ENCODE measurements at regions of chr13 and their contacts with region 1.

Region 1: DNA sequence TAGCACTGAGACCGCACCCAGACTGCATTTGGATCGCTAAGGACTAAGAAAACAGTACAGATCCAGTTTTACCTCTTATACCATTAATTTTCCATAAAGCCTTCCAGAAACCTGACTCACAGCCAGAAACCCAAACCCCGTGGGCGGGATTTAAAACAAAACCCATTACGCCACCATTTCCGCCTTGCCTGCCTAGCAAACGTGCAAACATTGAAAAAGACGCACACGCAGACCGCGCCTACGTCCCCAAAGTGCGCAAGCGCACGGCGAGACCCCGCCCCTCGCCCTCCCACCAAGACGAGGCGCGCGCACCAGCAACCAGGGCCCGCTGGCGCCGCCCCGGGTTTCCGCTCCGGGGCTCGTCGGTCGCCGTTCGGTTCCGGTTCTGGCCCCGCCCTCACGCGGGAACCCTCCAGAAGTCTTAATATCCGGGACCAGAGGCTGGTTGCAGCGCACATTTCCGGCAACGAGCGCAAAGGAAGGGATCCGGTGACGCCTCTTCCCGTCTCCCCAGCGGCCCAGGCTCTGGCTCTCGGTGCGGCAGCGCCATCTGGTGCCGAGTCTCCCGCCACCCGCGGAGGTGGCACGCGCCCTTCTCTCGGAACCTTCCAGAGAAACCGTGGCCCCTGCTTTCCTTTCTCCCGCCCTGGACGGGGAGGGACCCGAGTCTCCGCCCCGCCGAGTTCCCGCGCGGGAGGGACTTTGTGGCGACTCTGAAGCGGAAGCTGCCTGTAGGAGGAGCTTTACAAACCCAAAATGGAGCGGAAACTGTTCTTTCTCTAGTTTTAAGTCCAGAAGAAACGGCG is 256.9 kb upstream of the STARD13 start:
- DNase-seq: peak; percentile 97
- ATAC-seq: peak; percentile 85
- H3K4me3 ChIP-seq: peak overlapping the region; percentile 71
- H3K27ac ChIP-seq: peak overlapping the region; percentile 97
- H3K4me1 ChIP-seq: peaks cover 41% of the 10 kb centered on the region
- H3K27me3 ChIP-seq: no peaks in the 10 kb centered on the region
- CTCF ChIP-seq: peak; percentile 84

Region 2: DNA sequence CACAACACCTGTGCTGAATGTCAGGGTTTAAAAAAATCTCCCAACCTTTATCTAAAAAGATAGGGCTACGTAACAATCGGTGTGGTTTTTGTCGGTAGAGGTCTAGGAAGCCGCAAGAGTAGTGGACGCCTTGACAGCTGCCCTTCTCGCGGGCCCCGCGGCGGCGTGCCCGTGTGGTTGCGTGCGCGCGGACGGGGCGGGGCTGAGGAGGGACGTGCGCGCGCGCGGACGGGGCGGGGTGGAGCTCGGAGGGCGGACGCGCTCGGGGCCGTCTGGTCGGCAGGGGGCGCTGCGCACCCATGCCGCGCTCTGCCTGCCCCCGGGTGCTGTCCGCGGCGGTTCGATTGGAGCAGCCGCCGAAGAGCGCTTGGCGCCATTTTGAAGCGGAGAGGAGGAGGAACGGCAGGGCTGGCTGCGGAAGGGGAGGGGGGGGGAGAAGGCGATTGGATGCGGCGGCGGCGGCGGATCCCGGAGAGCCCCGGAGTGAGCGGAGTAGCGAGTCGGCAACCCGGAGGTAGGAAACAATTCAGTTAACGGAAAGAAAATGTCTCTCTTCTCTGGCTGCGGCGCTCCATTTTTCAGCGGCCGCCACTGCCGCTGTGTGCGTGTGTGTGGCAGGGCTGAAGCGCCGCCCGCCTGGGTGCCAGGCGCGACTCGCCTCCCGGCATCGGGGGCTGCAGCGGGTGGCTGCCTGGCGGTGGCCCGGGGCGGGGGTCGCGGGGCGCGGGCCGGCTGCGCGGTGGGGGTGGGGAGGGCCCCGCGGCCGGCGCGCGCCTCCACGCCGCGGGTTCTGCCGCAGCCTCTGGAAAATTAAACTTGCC is 956.2 kb before region 1 on chr13 and contains the start of gene PDS5B:
- CTCF ChIA-PET with region 1: interaction called, 3 read pairs
- POLR2A ChIA-PET with region 1: no interaction called
- intact Hi-C with region 1: loop called (anchors 1 kb)
- DNase-seq: peak; percentile 92
- ATAC-seq: peak; percentile 84
- H3K4me3 ChIP-seq: peak within 1 kb of the TSS; percentile 96
- H3K27ac ChIP-seq: peak within 1 kb of the TSS; percentile 63
- H3K4me1 ChIP-seq: peaks cover 23% of the 10 kb centered on the region
- H3K27me3 ChIP-seq: no peaks in the 10 kb centered on the region
- CTCF ChIP-seq: peak; percentile 74
- total RNA-seq, gene PDS5B: 19.5 and 20.3 TPM in 2 replicates

Region 3: DNA sequence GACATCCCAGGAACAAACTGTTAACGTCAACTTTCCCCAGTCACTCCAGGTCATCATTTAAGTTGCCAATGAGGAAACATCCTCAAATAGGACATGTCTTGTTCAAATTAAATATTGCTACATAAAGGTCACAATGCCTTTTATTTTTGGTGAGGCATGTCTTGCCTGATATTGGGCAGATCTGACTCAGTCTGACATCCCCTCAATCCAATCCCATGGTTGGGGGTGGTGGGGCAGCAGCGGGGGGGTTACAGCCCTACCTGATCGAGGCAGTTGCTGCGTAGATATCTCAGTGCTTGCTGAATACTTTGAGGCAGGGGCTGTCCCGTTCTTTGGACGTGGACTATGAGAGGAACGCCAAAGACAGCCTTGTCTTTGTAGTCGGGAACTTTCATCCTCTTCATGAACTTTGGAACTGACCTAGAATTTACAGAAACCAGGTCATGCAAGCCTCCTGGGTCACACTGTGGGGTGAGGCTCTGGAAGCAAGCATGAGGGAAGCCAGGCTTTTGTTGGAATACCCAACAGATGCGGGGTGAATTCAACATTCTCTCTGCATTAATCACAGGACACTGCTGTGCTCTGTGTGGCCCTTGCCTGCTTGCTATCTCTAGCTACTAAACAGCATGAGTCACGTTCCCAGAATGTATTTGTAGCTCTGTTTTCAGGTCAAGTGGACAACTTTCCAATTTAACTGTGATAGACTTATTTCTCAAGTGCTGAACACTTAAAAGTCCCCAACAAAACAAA is 416.5 kb before region 1 on chr13:
- CTCF ChIA-PET with region 1: interaction called, 3 read pairs
- POLR2A ChIA-PET with region 1: no interaction called
- intact Hi-C with region 1: loop called (anchors 10 kb)
- DNase-seq: peak; percentile 90
- ATAC-seq: peak; percentile 98
- H3K4me3 ChIP-seq: no peak overlapping the region
- H3K27ac ChIP-seq: peak overlapping the region; percentile 80
- H3K4me1 ChIP-seq: peaks cover 31% of the 10 kb centered on the region
- H3K27me3 ChIP-seq: no peaks in the 10 kb centered on the region
- CTCF ChIP-seq: no peak

Region 4: DNA sequence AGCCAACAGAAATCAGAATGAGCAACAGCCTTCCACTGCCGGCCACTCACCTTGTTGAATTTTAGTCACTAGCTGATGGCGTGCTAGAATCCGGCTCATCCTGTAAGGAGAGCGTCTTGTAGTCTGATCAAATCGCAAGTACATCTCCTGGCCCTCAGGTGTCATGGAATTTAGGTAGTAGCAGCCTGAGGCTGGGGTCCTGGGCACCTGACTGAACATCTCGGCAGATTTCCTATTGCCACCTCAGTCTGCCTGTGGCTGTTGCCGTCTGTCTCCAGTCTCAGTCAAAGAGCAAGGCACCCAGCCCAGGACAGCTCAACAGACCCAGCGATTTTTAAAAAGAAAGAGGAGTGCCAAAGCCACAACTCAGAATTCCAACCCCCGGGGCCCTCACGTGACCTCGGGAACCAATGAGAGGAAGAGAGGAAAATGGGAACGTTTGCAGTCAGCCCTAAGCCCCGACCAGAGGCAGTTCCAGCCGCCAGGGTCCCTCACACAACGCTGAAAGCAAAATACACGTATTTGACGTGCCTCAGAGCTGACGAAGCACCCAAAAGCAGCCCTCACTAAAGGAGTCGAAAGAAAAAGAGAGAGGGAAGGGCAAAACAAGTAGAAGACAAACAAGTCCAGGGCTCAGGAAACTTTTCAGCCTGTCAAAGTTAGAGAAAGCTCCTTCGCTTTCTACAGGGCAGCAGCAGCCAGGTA is 256.9 kb before region 1 on chr13 and contains the start of gene STARD13:
- CTCF ChIA-PET with region 1: no interaction called
- POLR2A ChIA-PET with region 1: interaction called, 6 read pairs
- intact Hi-C with region 1: loop called (anchors 1 kb)
- DNase-seq: peak; percentile 96
- ATAC-seq: peak; percentile 89
- H3K4me3 ChIP-seq: peak within 1 kb of the TSS; percentile 83
- H3K27ac ChIP-seq: peak within 1 kb of the TSS; percentile 95
- H3K4me1 ChIP-seq: peaks cover 37% of the 10 kb centered on the region
- H3K27me3 ChIP-seq: no peaks in the 10 kb centered on the region
- CTCF ChIP-seq: peak; percentile 25; the same call in 1 of the 2 replicates
- total RNA-seq, gene STARD13: 24.3 and 26.6 TPM in 2 replicates

Region 5: GRCh38 chr13:33487575-33488243 is 54.8 kb before region 1 on chr13:
- CTCF ChIA-PET with region 1: no interaction called
- POLR2A ChIA-PET with region 1: no interaction called
- intact Hi-C with region 1: loop called (anchors 5 kb)
- DNase-seq: peak; percentile 54
- ATAC-seq: peak; percentile 72
- H3K4me3 ChIP-seq: no peak overlapping the region
- H3K27ac ChIP-seq: no peak overlapping the region
- H3K4me1 ChIP-seq: no peaks in the 10 kb centered on the region
- H3K27me3 ChIP-seq: no peaks in the 10 kb centered on the region
- CTCF ChIP-seq: peak; percentile 62

Region 6: DNA sequence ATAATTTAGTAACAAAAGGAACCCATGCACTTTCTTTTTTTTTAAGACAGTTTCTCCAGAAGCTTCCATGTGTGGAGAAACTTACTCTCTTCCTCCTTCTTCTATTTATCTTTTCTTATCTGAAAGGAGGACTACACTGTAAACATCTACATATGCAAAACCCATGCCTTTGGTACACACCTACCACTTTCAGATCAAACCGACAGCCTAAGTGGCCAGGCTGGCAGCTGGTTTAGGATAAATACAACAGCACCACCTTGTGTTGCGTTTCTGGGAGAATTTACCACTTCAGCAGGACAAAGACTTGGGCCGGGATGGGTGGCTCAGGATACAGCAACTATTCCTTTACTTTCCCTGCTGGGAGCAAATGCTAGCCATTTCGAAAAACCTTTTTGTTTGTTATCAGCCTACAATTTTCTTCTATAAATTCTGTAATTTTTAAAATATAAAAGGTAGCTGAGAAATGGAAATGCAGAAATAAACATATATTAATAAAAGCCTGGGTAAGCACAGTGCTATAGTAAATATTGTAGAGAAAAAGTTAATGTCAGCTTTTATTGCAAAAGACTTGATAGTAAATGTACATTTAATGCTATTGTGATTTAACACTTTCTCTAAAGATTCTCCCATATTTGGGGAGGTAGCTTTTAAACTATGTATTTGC is 181.4 kb after region 1 on chr13:
- CTCF ChIA-PET with region 1: no interaction called
- POLR2A ChIA-PET with region 1: no interaction called
- intact Hi-C with region 1: loop called (anchors 1 kb)
- DNase-seq: peak; percentile 84
- ATAC-seq: peak; percentile 96
- H3K4me3 ChIP-seq: no peak overlapping the region
- H3K27ac ChIP-seq: no peak overlapping the region
- H3K4me1 ChIP-seq: 0 out of 2 replicates have a peak, but pooled peaks cover 15% of the 10 kb centered on the region
- H3K27me3 ChIP-seq: no peaks in the 10 kb centered on the region
- CTCF ChIP-seq: peak; percentile 84